Activated naive CD4-positive, alpha-beta T cell treated with anti-CD3 and anti-CD28 coated beads for 36 hours (primary cell): ENCODE measurements at regions of chr4 and their contacts with region 1.

Region 1: GRCh38 chr4:56799824-56800756 is 21.4 kb downstream of the SPINK2 start:
- DNase-seq: peak; percentile 94
- H3K4me3 Mint-ChIP-seq: peak overlapping the region; percentile 95
- H3K27ac Mint-ChIP-seq: peak overlapping the region; percentile 73
- H3K4me1 Mint-ChIP-seq: peaks cover 12% of the 10 kb centered on the region
- H3K27me3 Mint-ChIP-seq: no peaks in the 10 kb centered on the region

Region 2: GRCh38 chr4:55635741-55636655 is 1164.1 kb before region 1 on chr4 and contains the start of gene NMU:
- CTCF ChIA-PET with region 1: no interaction called
- intact Hi-C with region 1: no loop called
- DNase-seq: peak; percentile 58
- H3K4me3 Mint-ChIP-seq: peak within 1 kb of the TSS; percentile 69
- H3K27ac Mint-ChIP-seq: no peak within 1 kb of the TSS
- H3K4me1 Mint-ChIP-seq: peaks cover 15% of the 10 kb centered on the region
- H3K27me3 Mint-ChIP-seq: peaks cover 51% of the 10 kb centered on the region
- total RNA-seq, gene NMU: not detected

Region 3: GRCh38 chr4:56467284-56468096 is 332.6 kb before region 1 on chr4 and contains the start of gene SRP72:
- CTCF ChIA-PET with region 1: no interaction called
- intact Hi-C with region 1: loop called (anchors 1 kb)
- DNase-seq: peak; percentile 91
- H3K4me3 Mint-ChIP-seq: peak within 1 kb of the TSS; percentile 100
- H3K27ac Mint-ChIP-seq: peak within 1 kb of the TSS; percentile 97
- H3K4me1 Mint-ChIP-seq: peaks cover 33% of the 10 kb centered on the region
- H3K27me3 Mint-ChIP-seq: no peaks in the 10 kb centered on the region
- total RNA-seq, gene SRP72: 200 to 212 TPM

Region 4: DNA sequence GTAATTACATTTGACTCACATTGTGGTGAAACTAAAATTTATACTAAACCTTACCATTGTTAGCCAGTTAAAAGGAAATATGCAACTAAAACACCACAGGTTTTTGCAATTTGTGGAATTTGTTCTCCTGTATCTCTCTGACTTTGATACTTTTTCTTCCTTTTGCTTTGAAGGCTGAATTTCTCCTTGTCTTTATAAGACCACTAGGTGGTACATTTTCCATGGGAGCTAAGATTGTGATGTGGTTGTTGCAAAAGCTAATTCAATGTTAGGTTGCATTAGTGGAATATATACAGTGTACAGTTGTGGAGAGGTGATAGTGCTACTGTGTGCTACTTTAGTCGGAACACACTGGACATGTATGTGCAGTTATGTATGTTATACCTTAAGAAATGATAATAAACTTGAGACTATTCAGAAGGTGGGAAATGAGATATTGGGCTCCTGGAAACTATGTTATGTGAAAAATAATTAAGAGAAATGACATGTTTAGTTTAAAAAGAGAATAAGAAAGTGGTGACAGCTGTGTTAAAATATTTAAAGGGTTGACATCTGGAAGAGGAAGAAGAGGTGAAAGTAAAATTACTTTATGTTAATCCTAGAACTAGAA is 224.2 kb before region 1 on chr4:
- CTCF ChIA-PET with region 1: interaction called, 6 read pairs
- intact Hi-C with region 1: loop called (anchors 1 kb)
- DNase-seq: no peak
- H3K4me3 Mint-ChIP-seq: no peak overlapping the region
- H3K27ac Mint-ChIP-seq: no peak overlapping the region
- H3K4me1 Mint-ChIP-seq: no peaks in the 10 kb centered on the region
- H3K27me3 Mint-ChIP-seq: no peaks in the 10 kb centered on the region

Region 5: GRCh38 chr4:56681158-56681852 is 118.8 kb before region 1 on chr4 and contains the start of gene HOPX:
- CTCF ChIA-PET with region 1: interaction called, 4 read pairs
- intact Hi-C with region 1: loop called (anchors 1 kb)
- DNase-seq: peak; percentile 82
- H3K4me3 Mint-ChIP-seq: peak within 1 kb of the TSS; percentile 16
- H3K27ac Mint-ChIP-seq: no peak within 1 kb of the TSS
- H3K4me1 Mint-ChIP-seq: peaks cover 23% of the 10 kb centered on the region
- H3K27me3 Mint-ChIP-seq: peaks cover 34% of the 10 kb centered on the region
- total RNA-seq, gene HOPX: 14.0 to 14.7 TPM

Region 6: GRCh38 chr4:56757821-56758411 is 42.2 kb before region 1 on chr4:
- CTCF ChIA-PET with region 1: interaction called, 11 read pairs
- intact Hi-C with region 1: loop called (anchors 1 kb)
- DNase-seq: peak; percentile 92
- H3K4me3 Mint-ChIP-seq: peak overlapping the region; percentile 57
- H3K27ac Mint-ChIP-seq: peak overlapping the region; percentile 89
- H3K4me1 Mint-ChIP-seq: peaks cover 26% of the 10 kb centered on the region
- H3K27me3 Mint-ChIP-seq: no peaks in the 10 kb centered on the region

Region 7: DNA sequence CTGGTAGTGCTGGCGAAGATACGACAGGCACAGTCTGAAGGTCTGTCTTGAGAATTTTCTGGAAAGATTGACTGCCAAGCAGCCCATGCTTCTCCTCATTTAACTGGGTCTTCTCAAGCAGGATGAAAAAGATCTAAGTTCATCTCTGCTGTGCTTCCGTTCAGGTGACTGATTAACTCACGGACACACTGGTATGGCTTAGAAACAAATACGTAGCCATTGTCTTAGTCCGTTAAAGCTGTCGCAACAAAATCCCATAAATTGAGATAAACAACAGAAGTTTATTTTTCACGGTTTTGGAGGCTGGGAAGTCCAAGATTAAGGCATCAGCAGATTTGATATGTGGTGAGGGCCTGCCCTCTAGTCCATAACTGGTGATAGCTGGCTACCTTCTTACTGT is 18.1 kb before region 1 on chr4:
- CTCF ChIA-PET with region 1: no interaction called
- intact Hi-C with region 1: no loop called
- DNase-seq: no peak
- H3K4me3 Mint-ChIP-seq: no peak overlapping the region
- H3K27ac Mint-ChIP-seq: no peak overlapping the region
- H3K4me1 Mint-ChIP-seq: no peaks in the 10 kb centered on the region
- H3K27me3 Mint-ChIP-seq: no peaks in the 10 kb centered on the region